MCF 10A (cell line): ENCODE measurements at regions of chr5 and their contacts with region 1.

Region 1: DNA sequence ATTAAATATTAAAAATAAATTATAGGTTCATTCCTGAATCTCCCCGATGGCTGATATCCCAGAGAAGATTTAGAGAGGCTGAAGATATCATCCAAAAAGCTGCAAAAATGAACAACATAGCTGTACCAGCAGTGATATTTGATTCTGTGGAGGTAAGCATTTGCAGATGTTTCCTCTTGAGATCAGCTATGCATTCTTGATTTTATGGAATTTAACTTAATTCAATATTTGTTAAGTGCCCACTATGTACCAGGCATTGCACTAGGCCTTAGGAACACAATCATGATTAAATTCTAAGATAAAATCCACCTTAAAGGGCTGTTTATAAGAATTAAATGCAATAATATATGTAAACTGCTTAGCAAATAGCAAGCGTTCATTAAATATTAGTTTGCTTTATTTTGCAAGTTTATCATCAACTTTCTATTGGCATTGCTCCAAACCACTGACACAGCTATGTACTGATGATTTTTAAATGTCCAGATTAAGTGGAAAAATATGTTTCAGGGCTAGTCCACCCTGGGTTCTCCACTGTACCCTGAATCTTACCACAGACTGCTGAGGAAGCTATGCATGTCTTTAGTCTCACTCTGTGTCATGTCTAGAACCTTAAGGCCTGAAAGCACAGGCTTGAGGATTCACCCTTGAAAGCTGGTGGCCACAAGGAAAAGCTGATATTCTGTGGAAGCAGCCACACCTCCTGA is 33.2 kb downstream of the SLC22A4 start:
- DNase-seq: no peak
- H3K4me3 Mint-ChIP-seq: no peak overlapping the region
- H3K27ac Mint-ChIP-seq: no peak overlapping the region
- H3K4me1 Mint-ChIP-seq: peaks cover 7% of the 10 kb centered on the region
- H3K27me3 Mint-ChIP-seq: no peaks in the 10 kb centered on the region
- CTCF ChIP-seq: no peak

Region 2: DNA sequence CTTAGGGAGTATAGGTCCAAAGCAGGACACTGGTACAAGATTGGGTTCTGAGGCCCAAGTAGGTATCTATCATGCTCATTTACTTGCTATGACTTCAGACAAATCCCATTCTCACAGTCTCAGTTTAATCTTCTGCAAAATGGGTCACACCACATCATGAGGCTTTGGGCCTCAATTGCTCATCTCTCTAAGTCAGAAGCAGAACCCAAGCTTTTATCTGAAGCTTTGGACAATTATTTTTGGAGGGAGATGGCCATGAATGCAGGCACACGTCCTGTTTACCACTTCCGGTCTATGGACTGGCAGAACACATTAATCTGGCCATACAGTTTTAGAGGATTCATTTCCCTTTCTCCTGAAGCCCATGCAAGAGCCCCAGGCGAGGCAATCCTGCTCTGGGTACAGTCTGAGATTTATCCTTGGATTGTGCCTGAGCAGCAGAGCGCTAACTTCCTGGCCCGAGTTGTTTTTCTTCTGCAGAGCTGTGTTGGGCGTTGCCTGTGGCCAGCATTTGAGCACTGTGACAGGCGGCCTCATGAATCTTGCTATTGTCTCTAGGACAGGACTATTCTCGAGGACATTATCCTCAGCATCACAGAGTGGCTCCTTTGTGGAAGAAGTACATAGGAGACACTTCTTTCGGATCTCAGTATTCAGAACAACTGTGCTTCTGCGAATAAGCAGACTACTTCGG is 17.1 kb before region 1 on chr5:
- CTCF ChIA-PET with region 1: interaction called, 23 read pairs
- POLR2A ChIA-PET with region 1: interaction called, 8 read pairs
- intact Hi-C with region 1: no loop called
- DNase-seq: no peak
- H3K4me3 Mint-ChIP-seq: no peak overlapping the region
- H3K27ac Mint-ChIP-seq: no peak overlapping the region
- H3K4me1 Mint-ChIP-seq: peaks cover 17% of the 10 kb centered on the region
- H3K27me3 Mint-ChIP-seq: no peaks in the 10 kb centered on the region
- CTCF ChIP-seq: no peak

Region 3: DNA sequence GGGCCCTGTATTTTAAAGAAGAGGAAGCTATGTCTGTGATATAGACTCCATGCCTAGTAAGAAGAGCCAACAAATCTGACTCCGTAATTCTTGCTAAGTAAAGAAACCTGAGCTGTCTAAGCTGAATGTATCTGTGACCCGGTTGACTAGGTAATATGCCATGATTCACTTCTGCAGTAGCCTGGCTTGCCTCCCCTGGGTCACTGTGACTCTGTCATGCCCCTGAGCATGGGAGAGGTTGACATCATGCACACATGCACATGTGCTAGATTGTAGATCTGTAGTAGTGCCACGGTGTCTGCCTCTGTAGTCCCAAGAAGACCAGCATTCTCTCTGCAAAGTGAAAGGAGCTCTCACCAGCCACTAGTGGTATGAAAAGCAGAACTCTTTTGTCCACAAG is 51.2 kb after region 1 on chr5:
- CTCF ChIA-PET with region 1: no interaction called
- POLR2A ChIA-PET with region 1: no interaction called
- intact Hi-C with region 1: no loop called
- DNase-seq: no peak
- H3K4me3 Mint-ChIP-seq: no peak overlapping the region
- H3K27ac Mint-ChIP-seq: peak overlapping the region; percentile 58
- H3K4me1 Mint-ChIP-seq: peaks cover 57% of the 10 kb centered on the region
- H3K27me3 Mint-ChIP-seq: no peaks in the 10 kb centered on the region
- CTCF ChIP-seq: no peak

Region 4: DNA sequence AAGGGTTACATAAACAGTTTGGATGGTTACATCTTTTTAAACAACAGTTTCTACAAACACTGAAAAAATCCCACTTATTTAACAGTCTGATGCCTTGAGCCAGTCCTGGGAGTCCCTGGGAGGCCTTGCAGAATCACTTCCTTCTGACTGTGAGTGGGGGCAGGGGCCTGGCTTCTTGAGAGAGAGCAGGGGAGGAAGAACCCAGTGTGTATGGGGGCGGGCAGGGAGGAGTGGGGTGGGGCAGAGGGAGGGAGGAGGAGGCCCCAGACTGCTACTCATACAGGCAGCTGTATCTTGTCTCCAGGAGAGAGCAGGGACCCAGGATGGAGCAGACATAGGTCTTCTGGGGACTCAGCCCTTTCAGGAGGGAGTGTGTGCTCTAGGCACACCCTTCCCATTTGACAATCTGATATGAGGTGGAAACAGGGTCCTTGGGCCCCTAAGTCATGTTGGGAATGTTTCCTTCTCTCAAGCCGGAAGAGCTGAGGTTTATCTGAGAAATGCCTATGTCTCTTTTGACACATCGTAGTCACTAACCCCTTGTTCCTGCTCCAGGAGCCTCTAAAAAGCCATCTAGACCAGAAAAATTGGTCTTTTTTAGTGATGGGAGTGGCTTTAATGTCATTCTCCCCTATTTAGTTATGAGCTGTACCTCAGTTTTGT is 110.3 kb after region 1 on chr5:
- CTCF ChIA-PET with region 1: no interaction called
- POLR2A ChIA-PET with region 1: no interaction called
- intact Hi-C with region 1: no loop called
- DNase-seq: peak; percentile 57
- H3K4me3 Mint-ChIP-seq: no peak overlapping the region
- H3K27ac Mint-ChIP-seq: no peak overlapping the region
- H3K4me1 Mint-ChIP-seq: peaks cover 20% of the 10 kb centered on the region
- H3K27me3 Mint-ChIP-seq: no peaks in the 10 kb centered on the region
- CTCF ChIP-seq: no peak

Region 5: DNA sequence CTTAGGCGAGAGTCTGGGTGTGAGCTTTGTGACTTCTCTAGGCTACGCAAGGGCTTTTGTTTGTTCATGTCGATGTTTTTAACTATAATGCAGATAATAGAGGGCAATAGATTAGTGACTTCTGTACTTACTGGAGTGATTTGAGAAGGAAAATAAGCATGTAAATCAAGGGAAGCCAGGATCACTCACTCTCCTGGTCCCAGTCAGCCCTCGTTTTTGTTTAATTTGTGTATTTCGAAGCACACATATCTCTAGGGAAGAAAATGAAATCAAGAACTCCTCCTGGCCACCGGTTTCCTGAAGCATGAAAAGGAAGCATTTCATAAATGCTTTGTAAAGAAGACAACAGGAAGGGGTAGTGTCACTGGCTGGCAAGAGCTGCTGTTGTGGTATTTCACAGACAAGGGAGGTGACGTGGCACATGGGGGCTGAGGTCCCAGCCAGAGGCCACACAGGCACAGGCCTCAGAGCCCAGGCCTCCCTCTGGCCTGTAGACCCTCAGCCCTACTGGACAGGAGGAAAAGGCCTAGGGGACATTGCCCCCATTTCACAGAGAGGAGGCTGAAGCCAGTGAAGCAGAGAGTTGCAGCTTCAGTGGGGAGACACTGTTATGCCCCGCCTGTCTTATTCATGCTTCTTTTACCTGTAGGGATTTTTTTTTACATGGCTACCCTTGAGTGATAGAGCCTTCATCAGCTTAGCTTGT is 129.0 kb after region 1 on chr5:
- CTCF ChIA-PET with region 1: no interaction called
- POLR2A ChIA-PET with region 1: no interaction called
- intact Hi-C with region 1: no loop called
- DNase-seq: no peak
- H3K4me3 Mint-ChIP-seq: no peak overlapping the region
- H3K27ac Mint-ChIP-seq: peak overlapping the region; percentile 60
- H3K4me1 Mint-ChIP-seq: peaks cover 47% of the 10 kb centered on the region
- H3K27me3 Mint-ChIP-seq: no peaks in the 10 kb centered on the region
- CTCF ChIP-seq: no peak